Activated CD4-positive, alpha-beta T cell treated with anti-CD3 and anti-CD28 coated beads, Interleukin-2, amount 10 ng/mL, durations not matched to agents 24 days and 14 days (primary cell): ENCODE measurements at regions of chr1 and their contacts with region 1.

Region 1: GRCh38 chr1:35192853-35193664 is at the start of gene SFPQ:
- DNase-seq: peak; percentile 99
- H3K4me3 Mint-ChIP-seq: peak within 1 kb of the TSS; percentile 96
- H3K27ac Mint-ChIP-seq: peak within 1 kb of the TSS; percentile 99
- H3K4me1 Mint-ChIP-seq: peaks cover 34% of the 10 kb centered on the region
- H3K27me3 Mint-ChIP-seq: peaks cover 3% of the 10 kb centered on the region
- total RNA-seq, gene SFPQ: 385 and 392 TPM in 2 replicates

Region 2: GRCh38 chr1:34984793-34985608 is 208.1 kb before region 1 on chr1 and contains the start of gene TMEM35B:
- intact Hi-C with region 1: loop called (anchors 5 kb)
- DNase-seq: peak; percentile 95
- H3K4me3 Mint-ChIP-seq: peak within 1 kb of the TSS; percentile 95
- H3K27ac Mint-ChIP-seq: peak within 1 kb of the TSS; percentile 92
- H3K4me1 Mint-ChIP-seq: peaks cover 32% of the 10 kb centered on the region
- H3K27me3 Mint-ChIP-seq: no peaks in the 10 kb centered on the region
- total RNA-seq, gene TMEM35B: 20.1 and 22.1 TPM in 2 replicates

Region 3: DNA sequence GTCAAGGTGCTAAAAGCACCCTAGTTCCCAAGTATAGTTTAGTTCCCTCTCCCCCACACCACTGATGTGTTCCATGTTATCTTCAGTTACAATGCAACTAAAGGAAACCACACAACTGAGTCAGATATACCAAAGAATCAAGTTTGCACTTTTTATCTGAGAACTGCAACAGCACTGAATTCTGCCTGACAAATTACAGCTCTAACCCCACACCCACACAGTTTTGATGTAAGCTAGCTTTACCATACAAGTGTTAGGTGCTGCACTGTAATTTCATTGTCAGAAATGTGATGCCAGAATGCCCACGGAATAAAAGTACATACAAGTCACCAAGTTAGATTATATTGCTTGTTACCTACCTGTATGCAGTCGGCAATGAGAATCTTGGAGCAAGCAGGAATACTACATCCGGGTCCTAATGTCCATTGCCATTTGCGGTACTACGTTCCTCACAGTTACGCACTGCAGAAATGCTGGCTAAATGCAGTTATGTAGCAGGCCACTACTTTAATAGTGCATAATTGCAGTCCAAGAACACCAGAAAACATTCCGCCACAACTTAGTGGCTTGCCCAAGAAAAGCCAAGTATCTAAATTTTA is 12.2 kb before region 1 on chr1:
- intact Hi-C with region 1: loop called (anchors 1 kb)
- DNase-seq: no peak
- H3K4me3 Mint-ChIP-seq: peak overlapping the region; percentile 9
- H3K27ac Mint-ChIP-seq: peak overlapping the region; percentile 21
- H3K4me1 Mint-ChIP-seq: peaks cover 56% of the 10 kb centered on the region
- H3K27me3 Mint-ChIP-seq: no peaks in the 10 kb centered on the region

Region 4: GRCh38 chr1:35557292-35558063 is 364.4 kb after region 1 on chr1 and contains the starts of genes KIAA0319L and NCDN:
- intact Hi-C with region 1: loop called (anchors 1 kb)
- DNase-seq: peak; percentile 98
- H3K4me3 Mint-ChIP-seq: peak within 1 kb of the TSS; percentile 98
- H3K27ac Mint-ChIP-seq: peak within 1 kb of the TSS; percentile 98
- H3K4me1 Mint-ChIP-seq: peaks cover 47% of the 10 kb centered on the region
- H3K27me3 Mint-ChIP-seq: no peaks in the 10 kb centered on the region
- total RNA-seq, gene KIAA0319L: 35.2 and 35.3 TPM in 2 replicates
- total RNA-seq, gene NCDN: 33.5 and 34.0 TPM in 2 replicates

Region 5: GRCh38 chr1:35769759-35770446 is 576.8 kb after region 1 on chr1 and contains the start of gene CLSPN:
- intact Hi-C with region 1: loop called (anchors 5 kb)
- DNase-seq: peak; percentile 98
- H3K4me3 Mint-ChIP-seq: peak within 1 kb of the TSS; percentile 93
- H3K27ac Mint-ChIP-seq: peak within 1 kb of the TSS; percentile 95
- H3K4me1 Mint-ChIP-seq: peaks cover 23% of the 10 kb centered on the region
- H3K27me3 Mint-ChIP-seq: no peaks in the 10 kb centered on the region
- total RNA-seq, gene CLSPN: 59.4 and 62.3 TPM in 2 replicates

Region 6: DNA sequence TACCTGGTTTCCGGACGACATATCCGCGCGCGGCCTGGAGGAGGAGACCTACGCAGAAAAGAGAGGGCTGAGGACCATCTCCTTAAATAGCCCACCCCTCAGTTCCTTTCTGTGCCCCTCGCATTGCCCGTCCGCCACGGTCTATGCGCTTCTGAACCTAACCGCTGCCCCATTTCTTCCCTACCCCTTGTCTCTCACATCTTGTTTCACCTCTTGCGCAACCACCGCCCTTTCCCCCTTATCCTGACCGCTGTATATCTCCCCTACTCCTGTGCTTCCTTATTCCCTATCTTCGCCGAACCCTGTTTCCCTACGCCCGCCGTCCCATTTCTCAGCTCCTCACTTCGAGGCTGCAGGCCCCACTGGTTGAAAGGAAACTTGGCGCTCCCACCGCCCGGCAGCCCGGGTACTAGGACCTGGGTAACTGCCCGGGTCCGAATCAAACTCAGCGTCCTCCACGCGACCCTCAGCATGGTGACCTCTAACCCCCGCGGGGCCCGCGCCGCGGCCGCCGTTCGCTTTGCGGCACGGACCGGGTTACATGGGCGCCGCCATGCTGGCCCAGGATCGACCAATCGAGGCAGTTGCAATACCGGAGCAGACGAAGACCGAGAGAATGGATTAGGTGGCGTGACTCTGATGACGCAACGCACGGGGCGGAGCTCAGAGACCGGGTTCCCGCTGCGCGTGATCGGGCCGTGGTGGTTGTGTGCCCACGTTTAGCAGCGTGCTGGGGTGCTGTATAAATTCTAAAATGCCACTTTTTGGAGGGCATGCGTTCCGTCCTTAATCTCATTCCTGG is 1270.9 kb after region 1 on chr1 and contains the start of gene MRPS15:
- intact Hi-C with region 1: loop called (anchors 5 kb)
- DNase-seq: peak; percentile 99
- H3K4me3 Mint-ChIP-seq: peak within 1 kb of the TSS; percentile 99
- H3K27ac Mint-ChIP-seq: peak within 1 kb of the TSS; percentile 98
- H3K4me1 Mint-ChIP-seq: peaks cover 39% of the 10 kb centered on the region
- H3K27me3 Mint-ChIP-seq: no peaks in the 10 kb centered on the region
- total RNA-seq, gene MRPS15: 117 and 126 TPM in 2 replicates

Region 7: DNA sequence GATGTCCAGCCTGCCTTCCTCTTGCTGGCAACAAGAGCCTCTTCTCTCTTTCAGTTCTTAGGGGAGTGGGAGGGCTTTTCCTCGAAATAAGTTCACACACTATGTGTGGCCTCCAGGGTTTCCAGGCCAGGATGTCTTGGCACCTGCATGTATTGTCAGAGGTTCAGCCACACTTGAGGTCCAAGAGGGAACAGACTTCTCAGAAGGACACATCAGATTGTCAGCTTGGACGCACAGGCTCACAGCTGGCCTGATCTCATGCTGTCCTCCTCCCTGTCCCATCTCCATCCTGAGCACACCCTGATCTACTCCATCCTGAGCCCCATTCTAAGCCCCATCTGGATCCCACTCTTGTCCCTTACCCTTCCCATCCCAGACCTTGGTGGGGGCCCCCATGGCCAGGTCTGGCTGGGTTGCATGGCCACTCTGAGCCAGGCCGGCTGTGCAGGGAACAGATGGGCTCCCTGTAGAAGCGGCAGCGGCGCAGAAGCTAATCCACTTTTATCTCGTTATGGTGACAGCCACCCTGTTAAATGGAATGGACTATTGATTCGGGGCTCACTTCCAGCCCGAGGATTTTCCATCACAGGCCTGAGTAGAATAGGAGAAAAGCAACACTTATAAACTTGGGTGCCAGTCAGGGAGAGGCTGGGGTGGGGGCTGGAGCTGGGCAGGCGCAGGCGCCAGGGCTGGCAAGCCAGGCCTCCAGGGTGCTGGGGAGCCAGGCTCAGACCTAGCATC is 1374.7 kb after region 1 on chr1:
- intact Hi-C with region 1: no loop called
- DNase-seq: no peak
- H3K4me3 Mint-ChIP-seq: no peak overlapping the region
- H3K27ac Mint-ChIP-seq: no peak overlapping the region
- H3K4me1 Mint-ChIP-seq: no peaks in the 10 kb centered on the region
- H3K27me3 Mint-ChIP-seq: peaks cover 4% of the 10 kb centered on the region